Naive thymus-derived CD4-positive, alpha-beta T cell (primary cell): ENCODE measurements at regions of chr1 and their contacts with region 1.

Region 1: GRCh38 chr1:9717193-9718005 is 65.9 kb downstream of the PIK3CD start:
- DNase-seq: peak; percentile 63 to 95 (median 94)
- ATAC-seq: peak; percentile 90
- H3K4me3 ChIP-seq: peak overlapping the region; percentile 76
- H3K4me3 Mint-ChIP-seq: peak overlapping the region; percentile 80 to 98 (median 94)
- H3K27ac ChIP-seq: peak overlapping the region; percentile 63
- H3K27ac Mint-ChIP-seq: peak overlapping the region; percentile 90 to 99 (median 95)
- H3K4me1 ChIP-seq: peaks cover 60 to 87% of the 10 kb centered on the region in 2 donors
- H3K4me1 Mint-ChIP-seq: peaks cover 26 to 82% (median 66%) of the 10 kb centered on the region in 7 donors
- H3K27me3 ChIP-seq: no peaks in the 10 kb centered on the region
- H3K27me3 Mint-ChIP-seq: no peaks in the 10 kb centered on the region

Region 2: GRCh38 chr1:9643351-9644256 is 73.8 kb before region 1 on chr1:
- CTCF ChIA-PET with region 1: interaction called, 5 read pairs
- POLR2A ChIA-PET with region 1: interaction called, 31 read pairs
- intact Hi-C with region 1: no loop called
- DNase-seq: peak in 3 of 9 donors; percentile 10 to 55 (median 33)
- ATAC-seq: peak; percentile 43
- H3K4me3 ChIP-seq: no peak overlapping the region
- H3K4me3 Mint-ChIP-seq: peak overlapping the region; percentile 56 to 86 (median 76)
- H3K27ac ChIP-seq: peak overlapping the region; percentile 55
- H3K27ac Mint-ChIP-seq: peak overlapping the region; percentile 80 to 94 (median 90)
- H3K4me1 ChIP-seq: peaks cover 18 to 66% of the 10 kb centered on the region in 2 donors
- H3K4me1 Mint-ChIP-seq: peaks cover 46 to 83% (median 76%) of the 10 kb centered on the region in 7 donors
- H3K27me3 ChIP-seq: no peaks in the 10 kb centered on the region
- H3K27me3 Mint-ChIP-seq: no peaks in the 10 kb centered on the region

Region 3: GRCh38 chr1:9689011-9689706 is 28.2 kb before region 1 on chr1:
- CTCF ChIA-PET with region 1: interaction called, 6 read pairs
- POLR2A ChIA-PET with region 1: interaction called, 130 read pairs
- intact Hi-C with region 1: loop called in 1 of 2 experiments (anchors 1 kb)
- DNase-seq: peak; percentile 62 to 89 (median 82)
- ATAC-seq: peak; percentile 93
- H3K4me3 ChIP-seq: peak overlapping the region; percentile 50
- H3K4me3 Mint-ChIP-seq: peak overlapping the region; percentile 80 to 90 (median 87)
- H3K27ac ChIP-seq: peak overlapping the region; percentile 70
- H3K27ac Mint-ChIP-seq: peak overlapping the region in 8 of 9 donors; percentile 59 to 90 (median 78)
- H3K4me1 ChIP-seq: peaks cover 53 to 59% of the 10 kb centered on the region in 2 donors
- H3K4me1 Mint-ChIP-seq: peaks cover 36 to 85% (median 73%) of the 10 kb centered on the region in 7 donors
- H3K27me3 ChIP-seq: no peaks in the 10 kb centered on the region
- H3K27me3 Mint-ChIP-seq: no peaks in the 10 kb centered on the region

Region 4: DNA sequence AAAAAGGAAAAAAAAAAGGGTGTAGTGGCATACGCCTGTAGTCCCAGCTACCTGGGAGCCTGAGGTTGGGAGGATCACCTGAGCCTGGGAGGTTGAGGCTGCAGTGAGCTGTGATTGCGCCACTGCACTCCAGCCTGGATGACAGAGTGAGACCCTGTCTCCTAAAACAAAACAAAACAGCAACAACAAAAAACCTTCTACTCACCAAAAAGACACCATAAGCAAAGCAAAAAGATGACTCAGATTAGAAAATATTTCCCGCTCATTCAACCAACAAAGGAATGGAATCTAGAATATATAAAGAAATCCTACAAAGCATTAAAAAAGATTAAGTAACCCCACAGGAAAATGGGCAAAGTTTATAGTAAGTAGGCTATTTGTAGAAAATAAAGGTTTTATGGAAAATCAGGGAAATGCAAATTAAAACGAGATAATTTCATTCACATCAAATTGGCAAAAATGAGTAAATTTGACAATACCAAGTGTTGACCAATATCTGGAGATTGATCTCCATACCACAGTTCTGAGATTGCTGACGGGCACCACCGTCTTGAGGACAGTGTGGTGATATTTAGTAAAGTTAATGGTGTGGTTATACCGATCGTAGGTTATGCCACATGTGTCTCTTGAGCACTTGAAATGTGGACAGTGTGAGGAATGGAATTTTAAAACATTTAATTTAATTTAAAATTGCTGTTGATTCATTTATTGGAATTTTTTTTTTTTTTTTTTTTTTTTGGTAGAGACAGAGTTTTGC is 11.9 kb before region 1 on chr1:
- CTCF ChIA-PET with region 1: interaction called, 8 read pairs
- POLR2A ChIA-PET with region 1: interaction called, 71 read pairs
- intact Hi-C with region 1: loop called in 1 of 2 experiments (anchors 1 kb)
- DNase-seq: no peak
- ATAC-seq: no peak
- H3K4me3 ChIP-seq: no peak overlapping the region
- H3K4me3 Mint-ChIP-seq: peak overlapping the region in 8 of 10 donors; percentile 19 to 75 (median 62)
- H3K27ac ChIP-seq: peak overlapping the region; percentile 18
- H3K27ac Mint-ChIP-seq: peak overlapping the region; percentile 63 to 93 (median 77)
- H3K4me1 ChIP-seq: peaks cover 27 to 49% of the 10 kb centered on the region in 2 donors
- H3K4me1 Mint-ChIP-seq: peaks cover 29 to 83% (median 72%) of the 10 kb centered on the region in 7 donors
- H3K27me3 ChIP-seq: no peaks in the 10 kb centered on the region
- H3K27me3 Mint-ChIP-seq: no peaks in the 10 kb centered on the region

Region 5: DNA sequence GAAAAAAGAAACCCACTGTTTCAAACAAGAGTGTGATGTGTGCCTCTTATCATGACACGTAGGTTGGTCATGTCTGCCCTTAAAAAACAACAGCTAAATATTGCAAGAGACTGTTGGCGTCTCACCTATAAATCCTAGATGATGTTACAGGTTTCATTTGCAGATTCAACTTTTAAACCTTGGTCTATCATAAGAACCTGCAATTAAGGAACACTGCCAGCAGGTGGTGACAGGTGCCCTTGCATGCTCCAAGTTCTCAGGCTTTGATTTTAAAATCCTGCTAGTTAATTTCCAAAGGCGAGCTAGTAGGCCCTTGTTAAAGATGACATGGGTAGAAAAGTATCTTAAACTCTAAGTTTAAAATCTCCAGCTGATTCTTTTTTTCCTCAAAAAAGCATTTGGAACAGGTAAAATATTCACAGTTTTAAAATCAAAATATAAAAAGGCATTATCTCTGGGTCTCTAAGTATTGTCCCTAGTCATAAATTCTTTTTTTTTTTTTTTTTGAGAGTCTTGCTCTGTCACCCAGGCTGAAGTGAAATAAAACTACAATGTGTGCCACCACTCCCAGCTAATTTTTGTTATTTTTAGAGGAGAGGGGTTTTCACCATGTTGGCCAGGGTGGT is 67.2 kb after region 1 on chr1:
- CTCF ChIA-PET with region 1: no interaction called
- POLR2A ChIA-PET with region 1: interaction called, 11 read pairs
- intact Hi-C with region 1: no loop called
- DNase-seq: peak; percentile 29 to 78 (median 71)
- ATAC-seq: peak; percentile 65
- H3K4me3 ChIP-seq: no peak overlapping the region
- H3K4me3 Mint-ChIP-seq: peak overlapping the region in 2 of 10 donors; percentile 28 to 38
- H3K27ac ChIP-seq: no peak overlapping the region
- H3K27ac Mint-ChIP-seq: peak overlapping the region in 5 of 9 donors; percentile 23 to 76 (median 49)
- H3K4me1 ChIP-seq: peaks cover 11 to 17% of the 10 kb centered on the region in 2 donors
- H3K4me1 Mint-ChIP-seq: peaks cover 11 to 41% (median 32%) of the 10 kb centered on the region in 7 donors
- H3K27me3 ChIP-seq: no peaks in the 10 kb centered on the region
- H3K27me3 Mint-ChIP-seq: no peaks in the 10 kb centered on the region